ENCODE measurements at regions of chr2 and their contacts with region 1.

Region 1: DNA sequence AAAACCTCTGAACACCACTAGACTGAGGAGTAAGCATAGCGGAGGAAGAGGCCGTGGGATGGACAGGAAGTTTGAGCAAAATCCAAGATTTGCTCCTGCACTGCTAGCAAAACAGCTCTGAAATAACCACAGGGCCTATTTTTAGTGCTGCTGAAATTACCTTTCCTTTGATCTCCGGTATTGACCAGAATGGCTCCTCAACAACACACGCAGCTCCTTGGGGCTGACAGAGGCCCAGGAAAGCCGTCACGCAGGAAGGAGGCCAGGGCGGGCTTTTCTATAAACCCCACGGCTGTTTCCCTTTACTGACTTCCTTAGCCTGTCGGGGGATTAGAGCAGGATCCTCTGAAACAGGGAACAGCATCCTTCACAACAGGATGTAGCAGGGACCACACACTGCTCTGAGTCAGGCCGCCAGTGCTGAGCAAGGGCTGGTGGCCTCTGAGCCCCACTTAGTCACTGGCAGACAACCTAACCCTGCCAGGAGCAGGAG is 80.8 kb upstream of the LCLAT1 start:
- DNase-seq: no peak
- H3K4me3 ChIP-seq: no peak overlapping the region
- H3K27ac ChIP-seq: peak overlapping the region; percentile 68 to 98 (median 97)
- H3K4me1 ChIP-seq: peaks cover 64 to 72% of the 10 kb centered on the region in 2 donors
- H3K27me3 ChIP-seq: no peaks in the 10 kb centered on the region
- CTCF ChIP-seq: no peak
- POLR2A ChIP-seq: no peak

Region 2: GRCh38 chr2:30078521-30078920 is 287.7 kb before region 1 on chr2:
- intact Hi-C with region 1: no loop called
- DNase-seq: no peak
- H3K4me3 ChIP-seq: no peak overlapping the region
- H3K27ac ChIP-seq: no peak overlapping the region
- H3K4me1 ChIP-seq: no peaks in the 10 kb centered on the region
- H3K27me3 ChIP-seq: no peaks in the 10 kb centered on the region
- CTCF ChIP-seq: no peak
- POLR2A ChIP-seq: no peak

Region 3: GRCh38 chr2:30447149-30448045 is 81.2 kb after region 1 on chr2 and contains the start of gene LCLAT1:
- intact Hi-C with region 1: loop called (anchors 10 kb)
- DNase-seq: peak; percentile 74 to 76
- H3K4me3 ChIP-seq: peak within 1 kb of the TSS; percentile 66 to 97 (median 80)
- H3K27ac ChIP-seq: peak within 1 kb of the TSS; percentile 11 to 78 (median 77)
- H3K4me1 ChIP-seq: peaks cover 8 to 13% of the 10 kb centered on the region in 2 donors
- H3K27me3 ChIP-seq: no peaks in the 10 kb centered on the region
- CTCF ChIP-seq: no peak
- POLR2A ChIP-seq: peak in 1 of 2 donors; percentile 63
- total RNA-seq, gene LCLAT1: 47.3 to 68.7 (median 54.1) TPM

Region 4: DNA sequence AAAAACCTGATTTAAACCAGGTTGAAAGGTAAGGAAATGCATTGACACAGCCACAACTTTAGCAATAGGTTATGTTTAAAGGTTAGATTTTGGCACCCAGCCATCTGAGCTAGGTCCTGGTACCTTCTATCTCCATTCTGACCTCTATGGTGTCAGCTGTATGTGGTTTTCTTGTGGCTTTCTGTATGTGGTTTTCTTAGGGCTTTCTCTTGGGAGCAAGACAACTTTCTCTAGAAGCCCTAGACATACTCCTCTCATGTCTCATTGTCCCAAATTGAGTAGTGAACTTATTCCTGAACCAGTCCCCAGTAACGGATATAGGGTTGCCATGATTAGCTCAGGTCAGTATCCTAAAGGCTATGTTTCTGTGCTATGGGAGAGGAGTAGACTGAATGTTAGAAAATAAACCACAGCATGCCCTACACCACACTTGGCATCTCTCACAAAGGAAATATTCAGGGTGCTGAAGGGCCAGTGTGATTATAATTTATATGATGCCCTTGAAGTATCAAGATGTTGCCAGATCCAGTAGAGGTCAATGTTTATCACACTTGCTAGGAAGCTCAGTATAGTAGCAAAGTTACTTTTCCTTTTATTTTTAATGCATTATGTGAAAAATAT is 264.9 kb after region 1 on chr2:
- intact Hi-C with region 1: no loop called
- DNase-seq: no peak
- H3K4me3 ChIP-seq: no peak overlapping the region
- H3K27ac ChIP-seq: no peak overlapping the region
- H3K4me1 ChIP-seq: peaks cover 8 to 10% of the 10 kb centered on the region in 2 donors
- H3K27me3 ChIP-seq: no peaks in the 10 kb centered on the region
- CTCF ChIP-seq: no peak
- POLR2A ChIP-seq: no peak

Measured in thyroid gland (tissue), 4 donors.